Right ventricle myocardium inferior (tissue), 1 donor: ENCODE measurements at regions of chrX and their contacts with region 1.

Region 1: GRCh38 chrX:16786139-16786790 is at the start of gene TXLNG:
- DNase-seq: peak; percentile 98
- ATAC-seq: peak; percentile 100
- total RNA-seq, gene TXLNG: 5.2 TPM

Region 2: DNA sequence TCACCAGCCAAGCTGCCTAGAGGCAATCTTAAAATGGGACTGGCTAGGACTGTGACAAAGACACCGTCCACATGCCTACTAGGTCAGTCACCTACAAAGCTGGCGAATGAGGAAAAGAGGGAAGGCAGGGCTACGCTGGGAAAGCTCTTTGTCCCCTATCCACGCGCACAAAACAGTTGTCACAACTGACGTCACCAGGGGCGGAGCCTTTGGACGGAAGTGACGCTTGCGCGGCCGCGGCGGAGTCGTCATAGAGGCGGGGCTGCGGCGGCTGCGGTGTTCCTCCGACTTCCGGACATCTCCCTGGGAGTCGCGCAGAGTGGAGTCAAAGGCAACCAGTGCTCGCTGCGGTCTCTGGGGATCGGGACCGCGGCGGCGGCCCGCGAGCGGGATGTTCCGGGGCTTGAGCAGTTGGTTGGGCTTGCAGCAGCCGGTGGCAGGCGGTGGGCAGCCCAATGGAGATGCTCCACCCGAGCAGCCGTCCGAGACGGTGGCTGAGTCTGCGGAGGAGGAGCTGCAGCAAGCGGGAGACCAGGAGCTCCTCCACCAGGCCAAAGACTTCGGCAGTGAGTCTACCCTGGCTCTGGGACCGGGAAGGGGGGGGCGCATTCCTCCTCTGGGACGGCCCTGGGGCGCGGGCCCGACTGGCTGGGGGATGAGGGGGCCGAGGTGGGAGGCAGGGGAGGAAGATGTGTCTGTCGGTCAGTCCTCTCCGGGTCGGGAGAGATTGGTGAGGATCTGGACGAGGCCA is 66.8 kb before region 1 on chrX and contains the start of gene SYAP1:
- intact Hi-C with region 1: loop called (anchors 10 kb)
- DNase-seq: peak; percentile 95
- ATAC-seq: peak; percentile 99
- total RNA-seq, gene SYAP1: 19.0 TPM

Region 3: DNA sequence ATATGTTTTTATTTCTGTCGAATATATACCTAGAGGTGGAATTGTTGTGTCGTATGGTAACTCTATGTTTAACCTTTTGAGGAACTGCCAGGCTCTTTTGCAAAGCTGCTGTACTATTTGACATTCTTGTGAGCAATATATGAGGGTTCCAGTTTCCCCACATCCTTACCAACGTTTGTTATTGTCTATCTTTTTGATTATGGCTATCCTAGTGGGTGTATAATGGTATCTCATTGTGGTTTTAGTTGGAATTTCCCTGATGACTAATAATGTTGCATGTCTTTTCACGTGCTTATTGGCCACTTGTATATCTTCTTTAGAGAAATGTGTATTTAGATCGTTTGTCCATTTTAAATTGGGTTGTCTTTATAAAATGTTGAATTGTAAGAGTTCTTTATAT is 184.7 kb after region 1 on chrX:
- intact Hi-C with region 1: no loop called
- DNase-seq: no peak
- ATAC-seq: no peak